Posterior vena cava (tissue), 2 donors: ENCODE measurements at regions of chr3 and their contacts with region 1.

Region 1: DNA sequence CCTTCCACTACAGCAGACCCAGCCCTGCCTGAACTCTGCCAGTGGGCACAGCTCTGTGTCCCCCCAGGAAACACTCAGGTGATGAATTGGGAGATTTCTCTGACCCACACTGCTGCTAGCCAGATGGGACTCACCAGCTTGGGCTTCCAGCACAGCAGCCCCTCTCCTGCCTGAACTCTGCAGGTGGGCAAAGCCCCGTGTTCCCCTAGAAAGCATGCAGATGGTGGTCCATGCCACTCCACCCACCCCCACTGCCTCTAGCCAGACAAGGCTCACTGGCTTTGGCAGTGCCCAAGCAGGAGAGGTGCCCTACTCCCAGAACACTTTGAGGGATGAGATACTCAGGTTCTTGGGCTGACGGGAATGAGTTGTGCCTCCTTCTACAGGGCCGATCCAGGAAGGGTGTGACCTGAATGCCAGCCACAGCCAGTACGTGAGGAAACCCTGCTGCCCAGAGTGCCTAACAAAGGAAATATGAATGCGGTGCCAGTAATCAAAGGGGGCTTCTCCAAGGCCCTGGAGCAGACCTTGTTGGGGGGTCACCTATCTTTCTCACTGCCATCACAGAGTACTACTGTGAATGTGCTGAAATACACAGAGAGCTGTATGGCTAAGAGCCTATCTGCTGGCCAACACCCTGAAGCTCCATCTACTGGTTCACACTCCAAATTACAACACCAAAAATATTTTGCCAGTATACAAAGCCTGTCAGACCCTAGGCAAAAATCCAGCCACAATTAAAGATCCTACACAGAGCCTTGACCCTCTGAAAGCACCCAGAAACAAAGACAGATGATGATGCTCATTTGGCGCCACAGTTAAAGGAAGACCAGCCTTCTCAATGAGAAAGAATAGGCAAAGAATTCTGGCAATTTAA is 61.9 kb downstream of the BTLA start:
- DNase-seq: no peak

Region 2: GRCh38 chr3:111859974-111860859 is 577.2 kb before region 1 on chr3:
- intact Hi-C with region 1: no loop called
- DNase-seq: peak; percentile 92

Region 3: DNA sequence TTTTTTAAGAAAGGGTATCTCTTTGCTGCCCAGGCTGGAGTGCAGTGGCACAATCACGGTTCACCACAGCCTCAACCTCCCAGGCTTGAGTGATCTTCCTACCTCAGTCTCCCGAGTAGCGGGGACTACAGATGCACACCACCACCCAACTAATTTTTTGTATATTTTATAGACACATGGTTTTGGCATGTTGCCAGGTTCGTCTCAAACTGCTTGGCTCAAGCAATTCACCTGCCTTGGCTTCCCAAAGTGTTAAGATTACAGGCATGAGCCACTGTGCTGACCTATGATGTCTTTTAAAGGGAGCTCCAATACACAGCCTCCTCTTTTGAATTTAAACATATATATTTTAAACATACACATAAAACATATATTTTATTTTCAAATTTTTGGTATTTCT is 204.3 kb before region 1 on chr3:
- intact Hi-C with region 1: loop called in 1 of 2 experiments (anchors 5 kb)
- DNase-seq: no peak

Region 4: GRCh38 chr3:112405845-112406244 is 31.5 kb before region 1 on chr3:
- intact Hi-C with region 1: no loop called
- DNase-seq: no peak